ENCODE measurements at regions of chr17 and their contacts with region 1.

Region 1: GRCh38 chr17:39153599-39154051 is 2.2 kb upstream of the PLXDC1 start:
- DNase-seq: peak; percentile 69
- ATAC-seq: peak; percentile 65
- H3K4me3 ChIP-seq: peak overlapping the region; percentile 55 to 62
- H3K27ac ChIP-seq: peak overlapping the region; percentile 56
- H3K4me1 ChIP-seq: peaks cover 11 to 23% of the 10 kb centered on the region in 2 experiments
- H3K27me3 ChIP-seq: no peaks in the 10 kb centered on the region
- CTCF ChIP-seq: 0 out of 6 replicates have a peak, but pooled peaks of 1 of the 3 experiments have one; percentile 1
- POLR2A ChIP-seq: no peak
- RAD21 ChIP-seq: no peak

Region 2: DNA sequence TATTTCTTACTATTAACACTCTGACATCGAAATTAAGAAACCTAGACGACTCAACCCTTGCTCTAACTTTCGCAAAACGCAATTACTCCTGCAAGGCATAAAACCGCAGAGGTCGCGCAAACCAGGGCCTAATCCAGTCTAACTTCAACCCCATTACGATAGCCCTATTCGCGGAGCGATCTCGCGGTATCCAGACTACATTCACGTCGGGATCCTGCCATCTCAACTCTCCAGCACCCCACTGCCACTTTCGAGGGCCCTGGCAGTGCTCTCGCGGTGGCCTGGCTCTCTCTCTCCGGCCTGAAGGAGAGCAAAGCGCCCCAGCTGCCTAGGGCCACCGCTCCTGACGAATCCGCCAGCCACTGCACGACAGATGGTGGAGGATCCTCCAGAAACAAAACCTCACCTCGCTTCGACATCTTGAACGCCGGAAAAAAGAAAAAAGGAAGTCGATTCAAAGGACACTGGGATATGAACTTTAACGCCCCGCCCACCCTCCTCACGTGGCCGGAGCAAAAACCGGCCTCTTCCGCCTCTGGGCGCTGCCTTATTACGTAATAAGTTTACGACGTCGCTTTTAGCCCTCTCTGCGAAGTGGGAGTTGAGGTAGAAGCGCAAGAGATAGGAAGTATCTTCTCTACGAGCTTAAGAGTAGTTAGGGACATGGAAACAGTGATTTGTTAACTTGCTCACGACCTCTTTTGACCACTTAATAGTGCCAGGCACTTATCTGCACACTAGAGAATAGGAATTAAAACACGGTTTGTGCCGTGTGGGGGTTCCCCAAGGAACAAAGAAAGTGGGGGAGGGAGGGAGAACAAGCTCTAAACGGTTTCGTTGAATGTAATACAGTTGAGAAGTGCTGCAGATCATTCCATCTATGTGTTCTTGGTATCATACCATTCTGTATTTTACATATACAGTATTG is 300.1 kb before region 1 on chr17 and contains the start of gene RPL23:
- CTCF ChIA-PET with region 1: no interaction called
- POLR2A ChIA-PET with region 1: interaction called, 12 read pairs
- RAD21 ChIA-PET with region 1: no interaction called
- intact Hi-C with region 1: no loop called
- DNase-seq: peak; percentile 95
- ATAC-seq: peak; percentile 80
- H3K4me3 ChIP-seq: peak within 1 kb of the TSS; percentile 67 to 99
- H3K27ac ChIP-seq: peak within 1 kb of the TSS; percentile 85
- H3K4me1 ChIP-seq: peaks cover 19 to 44% of the 10 kb centered on the region in 2 experiments; a peak in 3 of 4 replicates
- H3K27me3 ChIP-seq: no peaks in the 10 kb centered on the region
- CTCF ChIP-seq: no peak
- POLR2A ChIP-seq: peak; percentile 98
- RAD21 ChIP-seq: peak; percentile 17; the same call in 1 of the 2 replicates
- total RNA-seq, gene RPL23: 1,631 TPM

Region 3: DNA sequence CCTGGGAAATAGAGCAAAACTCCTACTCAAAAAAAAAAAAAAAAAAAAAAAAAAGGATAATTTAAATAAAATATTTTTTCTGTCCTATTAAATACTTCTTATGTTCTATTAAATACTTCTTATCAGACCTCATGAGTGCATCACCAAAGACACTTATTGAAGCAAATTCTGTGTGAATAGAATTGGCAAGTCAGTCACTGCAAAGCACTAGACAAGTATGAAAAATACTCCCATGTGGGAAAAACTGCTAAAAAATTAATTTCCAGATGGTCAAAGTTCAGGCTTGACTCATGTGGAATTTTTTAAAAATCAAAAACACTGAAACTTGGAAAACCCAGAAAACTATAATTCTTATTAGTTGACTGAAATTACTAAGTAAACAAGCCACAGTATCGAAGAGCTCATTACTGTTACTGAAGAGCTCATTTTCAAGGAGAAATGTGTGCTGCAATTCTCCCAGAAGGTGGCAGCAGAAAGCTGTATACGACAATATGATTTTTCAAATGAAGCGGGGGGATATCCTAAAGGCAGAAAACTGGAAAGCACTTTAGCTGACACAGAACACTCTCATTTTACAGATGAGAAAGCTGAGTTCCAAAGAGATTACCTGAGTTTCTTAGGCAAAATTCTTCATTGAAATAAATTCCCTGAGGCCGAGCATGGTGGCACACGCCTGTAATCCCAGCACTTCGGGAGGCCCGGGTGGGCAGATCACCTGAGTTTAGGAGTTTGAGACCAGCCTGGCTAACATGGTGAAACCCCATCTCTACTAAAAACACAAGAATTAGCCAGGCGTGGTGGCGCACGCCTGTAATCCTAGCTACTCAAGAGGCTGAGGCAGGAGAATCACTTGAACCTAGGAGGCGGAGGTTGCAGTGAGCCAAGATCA is 170.5 kb before region 1 on chr17:
- CTCF ChIA-PET with region 1: interaction called, 135 read pairs
- POLR2A ChIA-PET with region 1: interaction called, 12 read pairs
- RAD21 ChIA-PET with region 1: interaction called, 15 to 25 read pairs
- intact Hi-C with region 1: loop called (anchors 1 kb)
- DNase-seq: peak; percentile 53
- ATAC-seq: peak; percentile 91
- H3K4me3 ChIP-seq: no peak overlapping the region
- H3K27ac ChIP-seq: no peak overlapping the region
- H3K4me1 ChIP-seq: peaks cover 0 to 7% of the 10 kb centered on the region in 2 experiments; a peak in 2 of 4 replicates
- H3K27me3 ChIP-seq: no peaks in the 10 kb centered on the region
- CTCF ChIP-seq: peak; percentile 72 to 88 (median 82)
- POLR2A ChIP-seq: no peak
- RAD21 ChIP-seq: peak; percentile 93

Region 4: GRCh38 chr17:39164675-39165143 is 11.1 kb after region 1 on chr17:
- CTCF ChIA-PET with region 1: interaction called, 41 read pairs
- POLR2A ChIA-PET with region 1: interaction called, 17 read pairs
- RAD21 ChIA-PET with region 1: interaction called in 1 of 2 experiments, 7 read pairs
- intact Hi-C with region 1: no loop called
- DNase-seq: peak; percentile 69
- ATAC-seq: peak; percentile 92
- H3K4me3 ChIP-seq: peak overlapping the region in 1 of 2 experiments; percentile 7; a peak in 2 of 4 replicates
- H3K27ac ChIP-seq: no peak overlapping the region; the same call in 1 of the 2 replicates
- H3K4me1 ChIP-seq: peaks cover 6 to 10% of the 10 kb centered on the region in 2 experiments; a peak in 3 of 4 replicates
- H3K27me3 ChIP-seq: no peaks in the 10 kb centered on the region
- CTCF ChIP-seq: peak; percentile 69 to 92 (median 88); a peak in 5 of 6 replicates
- POLR2A ChIP-seq: no peak
- RAD21 ChIP-seq: peak; percentile 64

Region 5: GRCh38 chr17:39186481-39187002 is 32.9 kb after region 1 on chr17:
- CTCF ChIA-PET with region 1: no interaction called
- POLR2A ChIA-PET with region 1: no interaction called
- RAD21 ChIA-PET with region 1: no interaction called
- intact Hi-C with region 1: no loop called
- DNase-seq: no peak
- ATAC-seq: no peak
- H3K4me3 ChIP-seq: no peak overlapping the region
- H3K27ac ChIP-seq: no peak overlapping the region
- H3K4me1 ChIP-seq: no peaks in the 10 kb centered on the region
- H3K27me3 ChIP-seq: no peaks in the 10 kb centered on the region
- CTCF ChIP-seq: no peak
- POLR2A ChIP-seq: no peak
- RAD21 ChIP-seq: no peak

Region 6: GRCh38 chr17:39199820-39200069 is 46.1 kb after region 1 on chr17:
- CTCF ChIA-PET with region 1: interaction called, 3 read pairs
- POLR2A ChIA-PET with region 1: interaction called, 7 read pairs
- RAD21 ChIA-PET with region 1: no interaction called
- intact Hi-C with region 1: loop called (anchors 1 kb)
- DNase-seq: peak; percentile 93
- ATAC-seq: peak; percentile 51
- H3K4me3 ChIP-seq: peak overlapping the region; percentile 66 to 82
- H3K27ac ChIP-seq: peak overlapping the region; percentile 93
- H3K4me1 ChIP-seq: peaks cover 24 to 54% of the 10 kb centered on the region in 2 experiments
- H3K27me3 ChIP-seq: no peaks in the 10 kb centered on the region
- CTCF ChIP-seq: no peak
- POLR2A ChIP-seq: peak; percentile 70
- RAD21 ChIP-seq: no peak

Region 7: GRCh38 chr17:39385040-39385439 is 231.4 kb after region 1 on chr17:
- CTCF ChIA-PET with region 1: no interaction called
- POLR2A ChIA-PET with region 1: no interaction called
- RAD21 ChIA-PET with region 1: no interaction called
- intact Hi-C with region 1: no loop called
- DNase-seq: no peak
- ATAC-seq: no peak
- H3K4me3 ChIP-seq: no peak overlapping the region
- H3K27ac ChIP-seq: no peak overlapping the region
- H3K4me1 ChIP-seq: no peaks in the 10 kb centered on the region
- H3K27me3 ChIP-seq: no peaks in the 10 kb centered on the region
- CTCF ChIP-seq: no peak
- POLR2A ChIP-seq: no peak
- RAD21 ChIP-seq: no peak